PC-3 (cell line): ENCODE measurements at regions of chr12 and their contacts with region 1.

Region 1: DNA sequence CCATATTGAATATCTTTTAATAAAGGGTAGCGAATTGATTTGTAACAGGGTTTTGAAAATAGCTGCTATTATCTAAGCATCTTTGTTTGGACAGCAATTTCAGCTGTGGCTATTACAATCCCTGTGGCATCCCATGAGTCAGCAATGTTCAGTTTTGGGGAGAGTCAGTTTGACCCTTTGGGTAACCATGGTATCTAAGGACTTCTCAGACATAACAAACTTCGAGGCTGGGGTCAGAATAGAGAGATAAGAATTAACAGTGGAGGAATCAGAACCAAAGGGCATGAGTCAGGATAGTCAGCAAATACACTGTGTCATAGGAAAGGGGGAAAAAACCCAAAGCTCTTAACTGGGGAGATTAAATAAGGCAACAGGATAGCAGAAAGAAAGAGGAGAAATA is 11.7 kb upstream of the PTHLH start:
- DNase-seq: peak; percentile 100
- ATAC-seq: peak; percentile 54
- H3K4me3 ChIP-seq: peak overlapping the region; percentile 6
- H3K27ac ChIP-seq: peak overlapping the region; percentile 73
- H3K4me1 ChIP-seq: peaks cover 47% of the 10 kb centered on the region
- H3K27me3 ChIP-seq: no peaks in the 10 kb centered on the region
- CTCF ChIP-seq: no peak

Region 2: GRCh38 chr12:28035500-28035899 is 51.2 kb after region 1 on chr12:
- CTCF ChIA-PET with region 1: no interaction called
- POLR2A ChIA-PET with region 1: no interaction called
- intact Hi-C with region 1: loop called (anchors 2 kb)
- DNase-seq: peak; percentile 100
- ATAC-seq: peak; percentile 52
- H3K4me3 ChIP-seq: no peak overlapping the region
- H3K27ac ChIP-seq: peak overlapping the region; percentile 77
- H3K4me1 ChIP-seq: peaks cover 40% of the 10 kb centered on the region
- H3K27me3 ChIP-seq: no peaks in the 10 kb centered on the region
- CTCF ChIP-seq: no peak

Region 3: GRCh38 chr12:28130625-28131598 is 146.6 kb after region 1 on chr12:
- CTCF ChIA-PET with region 1: no interaction called
- POLR2A ChIA-PET with region 1: no interaction called
- intact Hi-C with region 1: loop called (anchors 2 kb)
- DNase-seq: peak; percentile 98
- ATAC-seq: peak; percentile 98
- H3K4me3 ChIP-seq: 0 out of 2 replicates have a peak overlapping the region, but pooled peaks have one; percentile 9
- H3K27ac ChIP-seq: peak overlapping the region; percentile 92
- H3K4me1 ChIP-seq: peaks cover 31% of the 10 kb centered on the region
- H3K27me3 ChIP-seq: no peaks in the 10 kb centered on the region
- CTCF ChIP-seq: no peak